ENCODE measurements at regions of chr2 and their contacts with region 1.

Region 1: DNA sequence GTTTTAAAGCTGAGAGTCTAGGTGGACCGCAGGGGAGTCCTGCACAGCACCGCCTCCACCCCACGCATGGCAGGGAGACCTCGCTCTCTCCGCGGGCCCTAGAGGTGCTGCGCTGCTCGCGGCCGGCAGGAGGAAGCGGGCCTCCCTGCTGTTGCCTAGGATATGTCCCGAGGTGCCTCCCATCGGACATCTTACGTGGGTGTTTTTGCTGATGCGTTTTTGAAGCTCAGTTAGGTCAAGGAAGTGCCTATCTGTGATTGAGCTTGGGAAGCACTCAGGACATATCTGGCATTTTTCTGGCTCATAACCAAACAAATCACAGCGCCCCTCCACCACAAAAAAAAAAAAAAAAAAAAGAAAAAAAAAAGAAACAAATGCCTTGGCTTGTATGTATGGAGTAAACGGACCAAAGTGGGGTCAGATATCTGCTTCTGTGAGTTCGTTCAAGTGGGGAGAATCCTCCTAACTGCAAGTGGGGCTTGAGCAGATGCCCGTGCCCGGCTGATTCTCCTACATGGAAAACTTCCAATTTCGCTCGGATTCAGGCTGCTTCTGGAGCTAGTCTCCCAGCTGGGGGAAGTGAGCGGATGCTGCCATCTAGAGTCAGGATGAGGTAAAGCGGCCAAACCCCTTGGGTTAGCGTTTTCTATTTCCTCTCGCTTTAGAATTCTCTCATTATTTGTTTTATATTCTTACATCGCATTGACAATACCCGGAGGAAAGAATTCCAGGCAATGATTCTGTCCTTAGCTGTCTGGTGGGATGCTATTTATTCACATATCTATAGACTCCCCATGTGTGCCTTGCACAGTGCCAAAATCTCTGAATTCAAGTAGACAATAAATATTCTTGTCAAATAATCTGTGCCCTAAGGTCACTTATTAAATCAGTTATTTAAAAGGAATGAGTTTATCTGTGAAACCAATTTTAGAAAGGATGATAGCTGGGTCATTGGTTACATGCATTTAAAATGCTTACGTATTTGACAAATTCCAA is 95.3 kb downstream of the CD8B2 start:
- DNase-seq: peak; percentile 71
- ATAC-seq: peak; percentile 86

Region 2: DNA sequence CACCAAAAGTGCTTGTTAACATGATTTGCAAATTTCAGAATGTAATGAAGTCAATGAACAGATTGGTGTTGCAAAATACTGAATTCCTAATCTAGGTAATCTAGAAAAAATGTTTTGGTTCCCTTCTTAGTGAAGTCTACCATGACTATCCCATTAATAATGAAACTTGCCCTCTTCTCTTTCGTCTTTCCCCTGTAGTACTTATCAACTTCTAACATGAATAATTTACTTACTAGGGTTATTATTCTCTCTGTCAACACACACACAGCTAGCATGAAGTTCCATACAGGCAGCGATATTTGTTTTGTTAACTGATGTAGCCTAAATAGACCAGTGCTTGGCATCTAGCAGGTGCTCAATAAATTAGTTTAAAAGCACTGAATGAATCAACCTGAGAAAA is 677.5 kb before region 1 on chr2:
- intact Hi-C with region 1: no loop called
- DNase-seq: no peak
- ATAC-seq: no peak

Region 3: GRCh38 chr2:106104332-106105062 is 477.9 kb before region 1 on chr2:
- intact Hi-C with region 1: loop called (anchors 10 kb)
- DNase-seq: no peak
- ATAC-seq: peak; percentile 58